Prostate gland (tissue), 2 donors: ENCODE measurements at regions of chr4 and their contacts with region 1.

Region 1: DNA sequence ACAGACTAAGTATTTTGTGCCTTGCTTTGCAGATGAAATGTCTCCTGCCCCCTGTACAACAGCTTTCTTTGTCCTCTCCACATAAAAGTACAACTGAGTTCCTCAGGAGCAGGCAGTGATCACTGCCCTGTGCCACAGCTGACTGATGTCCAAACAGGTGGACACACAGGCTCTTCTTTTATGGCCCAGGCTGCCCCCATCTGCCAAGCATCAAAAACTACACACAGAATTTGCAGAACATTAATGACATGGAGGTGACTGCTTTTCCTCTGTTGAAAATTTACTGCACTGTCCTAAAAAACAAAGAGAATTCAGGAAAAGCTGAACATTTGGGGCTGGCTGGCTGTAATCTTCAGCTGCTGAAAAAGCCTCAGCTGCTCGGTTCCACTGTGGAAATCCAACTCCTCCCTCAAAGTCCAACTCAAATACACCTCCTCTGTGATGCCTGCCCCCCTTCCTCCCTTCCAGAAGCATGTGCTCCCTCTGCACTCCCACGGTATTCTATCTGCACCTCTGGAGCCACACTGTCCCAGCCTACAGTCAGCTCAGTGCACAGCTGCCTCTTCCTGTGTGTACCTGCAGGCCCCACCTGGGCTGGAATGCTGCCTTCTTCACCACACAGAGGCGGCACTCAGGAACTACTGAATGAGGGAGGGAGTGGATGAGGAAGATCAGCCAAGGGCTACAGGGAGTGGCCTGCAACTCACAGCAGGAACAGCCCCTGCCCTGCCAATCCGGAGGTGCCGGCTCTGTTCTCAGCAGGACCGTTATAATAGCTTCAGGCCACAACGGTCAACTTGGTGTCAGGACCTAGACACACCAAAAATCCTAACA is 10.3 kb downstream of the AFAP1 start:
- DNase-seq: peak; percentile 85
- H3K4me3 ChIP-seq: no peak overlapping the region
- H3K27ac ChIP-seq: peak overlapping the region in 1 of 2 donors; percentile 54
- H3K4me1 ChIP-seq: peaks cover 3% of the 10 kb centered on the region
- H3K27me3 ChIP-seq: no peaks in the 10 kb centered on the region
- CTCF ChIP-seq: peak in 2 of 4 experiments; percentile 28 to 52
- POLR2A ChIP-seq: peak; percentile 17

Region 2: DNA sequence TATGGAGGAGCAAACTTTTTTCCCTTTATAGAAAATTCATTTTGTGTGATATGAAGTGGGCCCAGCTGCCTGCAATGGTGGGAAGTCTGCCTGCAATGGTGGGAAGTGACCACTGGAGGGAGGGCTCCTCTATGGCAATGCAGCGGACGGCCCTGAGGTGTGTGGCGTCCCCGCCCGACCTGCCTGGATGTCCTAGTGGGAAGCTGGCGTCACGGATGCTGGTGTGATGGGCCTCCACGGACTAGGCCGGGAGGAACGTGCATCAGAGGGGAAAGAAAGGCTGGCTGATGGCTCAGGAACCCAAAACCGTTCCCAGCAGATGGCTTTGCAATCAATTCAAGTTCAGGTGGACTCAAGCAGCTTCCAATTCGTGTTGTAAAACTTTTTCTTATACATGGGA is 167.6 kb before region 1 on chr4:
- intact Hi-C with region 1: loop called (anchors 5 kb)
- DNase-seq: no peak
- H3K4me3 ChIP-seq: no peak overlapping the region
- H3K27ac ChIP-seq: no peak overlapping the region
- H3K4me1 ChIP-seq: peaks cover 7% of the 10 kb centered on the region
- H3K27me3 ChIP-seq: no peaks in the 10 kb centered on the region
- CTCF ChIP-seq: peak; percentile 42 to 65 (median 55)
- POLR2A ChIP-seq: no peak